Activated CD8-positive, alpha-beta T cell treated with anti-CD3 and anti-CD28 coated beads for 36 hours (primary cell): ENCODE measurements at regions of chr19 and their contacts with region 1.

Region 1: GRCh38 chr19:5803752-5804515 is 933 bp upstream of the NRTN start:
- DNase-seq: peak; percentile 96
- ATAC-seq: peak; percentile 98
- H3K4me3 Mint-ChIP-seq: peak overlapping the region; percentile 69
- H3K27ac Mint-ChIP-seq: peak overlapping the region; percentile 76
- H3K4me1 Mint-ChIP-seq: peaks cover 22% of the 10 kb centered on the region
- H3K27me3 Mint-ChIP-seq: peaks cover 25% of the 10 kb centered on the region
- CTCF ChIP-seq: peak; percentile 93

Region 2: GRCh38 chr19:5814852-5815246 is 10.9 kb after region 1 on chr19:
- CTCF ChIA-PET with region 1: interaction called, 10 read pairs
- POLR2A ChIA-PET with region 1: interaction called, 3 read pairs
- intact Hi-C with region 1: no loop called
- DNase-seq: no peak
- ATAC-seq: no peak
- H3K4me3 Mint-ChIP-seq: no peak overlapping the region
- H3K27ac Mint-ChIP-seq: no peak overlapping the region
- H3K4me1 Mint-ChIP-seq: no peaks in the 10 kb centered on the region
- H3K27me3 Mint-ChIP-seq: peaks cover 5% of the 10 kb centered on the region
- CTCF ChIP-seq: no peak

Region 3: GRCh38 chr19:5839065-5840017 is 35.4 kb after region 1 on chr19 and contains the start of gene FUT6:
- CTCF ChIA-PET with region 1: interaction called, 12 read pairs
- POLR2A ChIA-PET with region 1: no interaction called
- intact Hi-C with region 1: no loop called
- DNase-seq: no peak
- ATAC-seq: no peak
- H3K4me3 Mint-ChIP-seq: no peak within 1 kb of the TSS
- H3K27ac Mint-ChIP-seq: no peak within 1 kb of the TSS
- H3K4me1 Mint-ChIP-seq: peaks cover 5% of the 10 kb centered on the region
- H3K27me3 Mint-ChIP-seq: peaks cover 1% of the 10 kb centered on the region
- CTCF ChIP-seq: no peak
- total RNA-seq, gene FUT6: not detected

Region 4: DNA sequence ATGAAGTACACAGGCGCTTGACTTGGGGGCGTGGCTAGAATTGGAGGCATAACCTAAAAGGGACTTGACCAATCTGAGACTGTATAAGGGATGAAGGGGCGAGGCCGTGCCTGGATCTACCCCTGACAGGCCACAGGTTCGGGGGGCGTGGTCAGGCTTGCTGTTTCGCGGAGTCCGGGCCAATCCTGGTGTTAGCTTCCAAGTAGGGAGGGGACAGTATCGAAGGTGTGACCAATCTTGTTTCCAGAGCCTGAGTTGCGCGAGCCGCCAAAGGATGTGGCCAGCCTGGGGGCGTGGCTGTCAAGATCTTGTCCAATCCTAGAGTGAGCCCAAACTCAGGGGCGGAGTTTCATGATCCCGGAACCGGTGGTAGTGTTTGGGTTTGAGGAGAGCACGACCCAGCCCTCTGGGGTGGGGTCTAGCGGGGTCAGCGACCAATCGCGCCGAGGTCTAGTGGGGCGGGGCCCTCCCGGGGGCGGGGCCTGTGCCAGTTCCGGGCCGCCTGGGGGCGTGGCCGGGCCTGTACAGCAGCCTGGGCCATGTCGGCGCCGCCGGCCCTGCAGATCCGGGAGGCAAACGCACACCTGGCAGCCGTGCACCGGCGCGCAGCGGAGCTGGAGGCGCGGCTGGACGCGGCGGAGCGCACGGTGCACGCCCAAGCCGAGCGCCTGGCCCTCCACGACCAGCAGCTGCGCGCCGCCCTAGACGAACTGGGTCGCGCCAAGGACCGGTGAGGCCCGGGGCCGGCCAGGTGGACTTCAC is 100.6 kb after region 1 on chr19 and contains the start of gene VMAC:
- CTCF ChIA-PET with region 1: interaction called, 57 read pairs
- POLR2A ChIA-PET with region 1: interaction called, 6 read pairs
- intact Hi-C with region 1: loop called (anchors 10 kb)
- DNase-seq: peak; percentile 100
- ATAC-seq: peak; percentile 83
- H3K4me3 Mint-ChIP-seq: peak within 1 kb of the TSS; percentile 99
- H3K27ac Mint-ChIP-seq: peak within 1 kb of the TSS; percentile 100
- H3K4me1 Mint-ChIP-seq: peaks cover 40% of the 10 kb centered on the region
- H3K27me3 Mint-ChIP-seq: no peaks in the 10 kb centered on the region
- CTCF ChIP-seq: no peak
- total RNA-seq, gene VMAC: 1.2 to 2.5 TPM

Region 5: GRCh38 chr19:5977785-5978605 is 174.1 kb after region 1 on chr19 and contains the start of gene RANBP3:
- CTCF ChIA-PET with region 1: interaction called, 21 read pairs
- POLR2A ChIA-PET with region 1: no interaction called
- intact Hi-C with region 1: no loop called
- DNase-seq: peak; percentile 99
- ATAC-seq: peak; percentile 91
- H3K4me3 Mint-ChIP-seq: peak within 1 kb of the TSS; percentile 95
- H3K27ac Mint-ChIP-seq: peak within 1 kb of the TSS; percentile 92
- H3K4me1 Mint-ChIP-seq: peaks cover 53% of the 10 kb centered on the region
- H3K27me3 Mint-ChIP-seq: no peaks in the 10 kb centered on the region
- CTCF ChIP-seq: no peak
- total RNA-seq, gene RANBP3: 74.3 to 87.5 TPM